Heart right ventricle (tissue), 16 donors: ENCODE measurements at regions of chr17 and their contacts with region 1.

Region 1: GRCh38 chr17:43994272-43995149 is 9.9 kb upstream of the NAGS start:
- DNase-seq: peak; percentile 54 to 69
- ATAC-seq: peak; percentile 83 to 93 (median 86)
- H3K4me3 ChIP-seq: peak overlapping the region in 9 of 10 donors; percentile 2 to 48 (median 35)
- H3K27ac ChIP-seq: no peak overlapping the region
- H3K4me1 ChIP-seq: peaks cover 0 to 10% (median 9%) of the 10 kb centered on the region in 9 donors
- H3K27me3 ChIP-seq: peaks cover 0 to 25% (median 4%) of the 10 kb centered on the region in 7 donors
- CTCF ChIP-seq: peak; percentile 68 to 90 (median 87)

Region 2: DNA sequence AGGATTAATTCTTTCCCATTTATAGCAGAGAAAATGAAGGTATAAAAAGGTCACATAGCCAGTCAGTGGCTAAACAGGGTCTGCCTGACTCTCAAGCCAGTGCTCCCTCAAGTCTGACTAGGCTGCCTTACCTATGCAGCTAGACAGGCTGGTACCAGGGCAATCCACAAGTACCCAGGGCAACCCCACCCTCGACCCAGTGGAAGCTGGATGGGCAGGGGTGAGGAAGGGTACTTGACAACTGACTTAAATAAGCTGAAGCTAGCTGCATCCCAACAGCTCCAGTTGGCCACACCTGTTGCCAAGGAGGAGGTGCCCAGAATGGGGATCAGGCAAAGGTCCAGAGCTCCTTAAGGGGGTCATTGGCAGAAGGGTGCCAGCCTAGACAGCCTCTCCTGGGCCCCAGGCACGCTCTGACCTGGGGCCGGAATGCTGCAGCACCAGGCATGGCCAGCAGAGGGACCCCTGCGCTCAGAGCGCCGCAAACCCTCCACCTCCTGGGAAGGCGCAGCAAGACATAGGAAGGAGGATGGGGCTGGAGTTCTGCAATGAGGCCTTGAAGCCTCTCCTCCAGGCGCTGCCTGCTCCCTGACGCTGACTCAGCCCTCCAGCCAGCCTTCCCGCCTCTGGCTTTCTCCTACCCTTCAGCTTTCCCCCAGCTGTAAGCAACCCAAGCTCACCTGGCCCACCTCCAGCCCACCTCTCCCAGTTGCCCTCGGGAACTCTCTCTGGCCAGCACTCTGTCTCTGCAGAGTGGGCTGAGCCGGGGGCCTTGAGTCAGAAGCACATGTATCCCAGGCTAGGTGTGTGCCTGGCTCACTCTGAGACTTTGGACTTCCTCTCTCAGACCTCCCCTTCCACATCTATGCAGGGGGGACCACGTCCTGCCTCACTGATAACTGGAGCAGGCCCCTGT is 116.0 kb before region 1 on chr17:
- intact Hi-C with region 1: loop called in 5 of 10 experiments (anchors 5 to 10 kb)
- DNase-seq: peak; percentile 65 to 78
- ATAC-seq: peak; percentile 68 to 87 (median 78)
- H3K4me3 ChIP-seq: no peak overlapping the region
- H3K27ac ChIP-seq: peak overlapping the region in 1 of 10 donors; percentile 5
- H3K4me1 ChIP-seq: peaks cover 0 to 24% (median 9%) of the 10 kb centered on the region in 9 donors
- H3K27me3 ChIP-seq: no peaks in the 10 kb centered on the region
- CTCF ChIP-seq: peak; percentile 86 to 99 (median 97)

Region 3: DNA sequence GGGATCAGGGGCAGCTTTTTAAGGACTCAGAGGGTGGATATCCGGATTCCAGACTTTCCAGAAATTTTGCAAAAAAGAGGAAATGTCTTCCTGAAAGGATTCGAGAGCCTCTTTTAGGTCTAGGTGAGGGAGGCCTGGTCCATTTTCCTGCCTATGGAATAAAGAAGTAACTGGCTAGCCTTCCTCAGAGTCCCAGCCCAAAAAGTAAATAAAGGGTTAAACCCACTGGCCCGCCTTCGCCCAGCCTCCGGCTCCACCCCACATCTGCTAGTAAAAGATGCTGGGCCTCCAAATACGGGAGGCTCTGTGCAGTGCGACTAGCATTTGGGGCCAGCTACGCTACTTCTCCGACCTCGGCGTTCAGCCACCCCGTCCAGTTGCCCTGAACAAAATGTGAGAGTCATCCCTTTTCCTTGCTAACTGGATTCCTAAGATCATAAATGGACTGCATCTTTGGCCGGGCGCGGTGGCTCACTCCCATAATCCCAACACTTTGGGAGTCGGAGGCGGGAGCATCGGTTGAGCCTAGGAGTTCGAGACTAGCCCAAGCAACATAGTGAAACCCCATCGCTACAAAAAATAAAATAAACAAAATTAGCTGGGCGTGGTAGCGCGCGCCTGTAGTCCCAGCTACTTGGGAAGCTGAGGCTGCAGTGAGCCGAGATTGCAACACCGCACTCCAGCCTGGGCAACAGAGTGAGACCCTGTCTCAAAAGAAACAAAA is 86.4 kb before region 1 on chr17:
- intact Hi-C with region 1: loop called in 1 of 10 experiments (anchors 1 kb)
- DNase-seq: peak; percentile 67 to 74
- ATAC-seq: peak; percentile 35 to 82 (median 74)
- H3K4me3 ChIP-seq: peak overlapping the region in 9 of 10 donors; percentile 61 to 95 (median 83)
- H3K27ac ChIP-seq: peak overlapping the region in 9 of 10 donors; percentile 38 to 89 (median 83)
- H3K4me1 ChIP-seq: peaks cover 3 to 41% (median 24%) of the 10 kb centered on the region in 9 donors
- H3K27me3 ChIP-seq: peaks cover 0 to 52% (median 0%) of the 10 kb centered on the region in 7 donors
- CTCF ChIP-seq: no peak

Region 4: GRCh38 chr17:43946069-43946696 is 48.3 kb before region 1 on chr17:
- intact Hi-C with region 1: loop called (anchors 1 to 10 kb)
- DNase-seq: no peak
- ATAC-seq: no peak
- H3K4me3 ChIP-seq: no peak overlapping the region
- H3K27ac ChIP-seq: no peak overlapping the region
- H3K4me1 ChIP-seq: peaks cover 0 to 5% (median 0%) of the 10 kb centered on the region in 9 donors
- H3K27me3 ChIP-seq: peaks cover 6 to 46% (median 35%) of the 10 kb centered on the region in 7 donors
- CTCF ChIP-seq: no peak

Region 5: DNA sequence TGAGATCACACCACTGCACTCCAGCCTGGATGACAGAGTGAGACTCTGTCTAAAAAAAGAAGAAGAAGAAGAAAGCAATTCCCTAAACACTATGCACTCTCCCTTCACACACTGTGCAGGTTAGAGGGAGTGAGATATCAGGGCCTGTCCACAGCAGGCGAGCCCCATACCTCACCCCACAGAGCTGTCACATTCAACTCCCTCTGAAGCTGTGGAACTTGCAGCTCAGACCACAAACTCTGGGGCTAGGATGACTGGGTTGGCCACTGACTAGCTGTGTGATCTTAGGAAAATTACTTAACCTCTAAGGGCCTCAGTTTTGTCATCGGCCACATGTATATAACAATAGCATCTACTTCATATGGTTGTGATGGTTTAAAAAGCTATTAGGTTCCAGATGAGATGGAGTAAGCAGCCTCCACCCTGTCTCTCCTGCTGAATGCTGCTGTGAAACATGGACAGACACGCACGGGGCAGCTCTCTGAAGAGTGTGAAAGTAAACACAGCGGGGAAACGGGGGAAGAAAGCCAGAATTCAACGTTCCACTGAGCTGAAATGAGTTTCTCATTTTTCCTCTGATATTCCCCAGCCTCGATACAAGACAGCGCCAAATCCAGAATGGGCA is 27.1 kb before region 1 on chr17:
- intact Hi-C with region 1: no loop called
- DNase-seq: no peak
- ATAC-seq: no peak
- H3K4me3 ChIP-seq: no peak overlapping the region
- H3K27ac ChIP-seq: no peak overlapping the region
- H3K4me1 ChIP-seq: no peaks in the 10 kb centered on the region
- H3K27me3 ChIP-seq: peaks cover 0 to 19% (median 1%) of the 10 kb centered on the region in 7 donors
- CTCF ChIP-seq: no peak

Region 6: DNA sequence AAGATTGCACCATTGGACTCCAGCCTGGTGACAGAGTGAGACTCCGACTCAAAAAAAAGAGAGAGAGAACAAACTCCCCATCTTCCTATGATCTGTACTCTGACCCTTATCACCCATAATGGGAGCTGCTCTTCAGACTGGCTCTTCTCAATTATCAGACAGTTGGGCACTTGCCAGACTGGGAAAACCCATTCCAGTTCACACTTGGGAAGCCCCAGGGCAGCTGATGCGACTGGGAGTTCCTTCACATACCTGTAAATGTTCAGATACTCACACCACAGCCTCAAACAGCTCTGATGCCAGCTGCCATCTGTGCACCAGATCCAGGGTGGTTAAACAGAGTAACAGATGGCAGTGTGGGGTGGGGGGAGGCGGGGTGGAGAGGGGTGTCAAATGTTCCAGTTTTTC is 44.1 kb after region 1 on chr17:
- intact Hi-C with region 1: no loop called
- DNase-seq: no peak
- ATAC-seq: peak in 1 of 8 donors; percentile 27
- H3K4me3 ChIP-seq: no peak overlapping the region
- H3K27ac ChIP-seq: peak overlapping the region in 1 of 10 donors; percentile 41
- H3K4me1 ChIP-seq: peaks cover 2 to 62% (median 29%) of the 10 kb centered on the region in 9 donors
- H3K27me3 ChIP-seq: no peaks in the 10 kb centered on the region
- CTCF ChIP-seq: no peak